ENCODE measurements at regions of chr1 and their contacts with region 1.

Region 1: DNA sequence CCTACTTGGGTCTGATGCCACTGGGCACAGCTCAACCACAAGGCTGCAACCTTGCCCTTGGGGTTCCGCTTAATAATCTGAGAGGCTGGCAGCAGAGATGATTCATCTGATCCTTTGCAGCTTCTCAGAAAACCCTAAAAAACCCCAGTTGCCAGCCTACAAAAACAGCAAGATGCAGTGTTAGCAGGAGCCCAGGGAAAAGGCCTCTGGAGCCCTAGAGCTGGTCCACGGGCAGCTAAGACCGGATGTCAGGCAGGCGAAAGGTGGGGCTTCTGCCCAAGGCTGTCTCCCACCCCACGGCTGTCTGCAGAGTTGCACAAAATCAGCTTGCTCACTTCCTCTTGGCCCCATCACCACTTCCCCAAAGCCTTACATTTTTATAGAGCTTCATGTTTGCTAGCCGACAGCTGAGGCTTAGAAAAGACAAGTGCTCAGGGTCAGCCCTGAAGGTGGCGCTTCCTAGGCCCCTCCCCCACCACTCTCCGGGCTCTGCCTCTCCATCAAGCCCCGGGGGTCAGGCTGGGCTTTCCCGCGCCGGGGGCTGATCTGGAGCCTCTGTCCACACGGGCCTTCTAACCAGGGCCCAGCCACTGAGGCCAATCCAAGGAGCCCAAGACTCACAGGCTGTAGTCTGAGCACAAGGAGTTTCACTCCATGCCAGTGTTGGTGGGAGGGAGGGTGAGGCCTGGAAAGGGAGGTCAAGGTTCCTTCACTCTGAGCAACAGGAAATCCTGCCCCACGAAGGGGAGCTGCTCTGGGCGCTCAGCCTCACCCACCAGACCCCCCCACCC is 4.2 kb upstream of the ADORA3 start:
- DNase-seq: peak; percentile 96
- H3K4me3 ChIP-seq: peak overlapping the region; percentile 23 to 48 (median 36)
- H3K27ac ChIP-seq: peak overlapping the region; percentile 89 to 95 (median 92)
- H3K4me1 ChIP-seq: peaks cover 42 to 83% (median 64%) of the 10 kb centered on the region in 4 donors
- H3K27me3 ChIP-seq: no peaks in the 10 kb centered on the region
- CTCF ChIP-seq: no peak
- EP300 ChIP-seq: no peak
- POLR2A ChIP-seq: no peak

Region 2: DNA sequence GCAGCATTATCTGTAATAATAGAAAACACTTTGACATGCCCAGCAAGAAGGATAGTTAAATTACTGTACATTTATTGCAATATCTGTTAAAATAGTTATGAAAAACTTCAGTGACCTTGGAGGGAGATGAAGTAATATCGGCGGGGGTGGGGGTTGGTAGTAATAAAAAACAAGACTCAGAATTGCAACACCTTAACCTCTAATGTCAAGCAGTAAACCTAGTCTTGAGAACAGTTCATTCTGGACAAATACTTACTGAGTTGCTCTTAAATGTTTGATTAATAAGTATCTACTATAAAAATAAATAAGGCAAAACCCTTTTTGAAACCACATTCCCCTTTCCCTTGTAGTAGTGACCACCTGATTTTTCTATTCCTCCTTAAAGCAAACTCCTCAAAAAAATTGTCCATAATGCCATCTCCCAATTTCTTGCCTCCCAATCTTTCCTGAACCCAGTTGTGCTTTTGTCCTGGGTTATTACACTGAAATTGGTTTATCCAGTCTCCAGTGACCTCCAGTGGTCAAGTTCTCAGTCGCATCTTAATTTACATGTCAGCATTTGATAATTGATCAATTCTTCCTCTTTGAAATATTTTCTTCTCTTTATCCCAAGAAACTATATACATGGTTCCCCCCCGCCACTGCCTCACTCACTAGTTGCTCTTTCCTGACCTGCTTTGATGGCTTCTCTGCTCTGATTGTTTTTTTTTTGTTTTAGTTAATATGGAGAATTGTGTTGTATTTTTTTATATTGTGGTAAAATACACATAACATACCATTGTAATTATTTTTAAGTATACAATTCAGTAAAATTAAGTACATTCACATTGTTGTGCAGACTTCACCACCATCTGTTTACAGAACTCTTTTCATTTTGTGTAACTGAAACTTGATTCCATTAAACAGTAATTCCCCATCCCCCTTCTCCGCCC is 148.7 kb after region 1 on chr1:
- intact Hi-C with region 1: loop called (anchors 5 kb)
- DNase-seq: no peak
- H3K4me3 ChIP-seq: no peak overlapping the region
- H3K27ac ChIP-seq: peak overlapping the region; percentile 1 to 68 (median 40)
- H3K4me1 ChIP-seq: peaks cover 33 to 90% (median 78%) of the 10 kb centered on the region in 4 donors
- H3K27me3 ChIP-seq: no peaks in the 10 kb centered on the region
- CTCF ChIP-seq: peak; percentile 61 to 68 (median 66)
- EP300 ChIP-seq: no peak
- POLR2A ChIP-seq: no peak

Region 3: DNA sequence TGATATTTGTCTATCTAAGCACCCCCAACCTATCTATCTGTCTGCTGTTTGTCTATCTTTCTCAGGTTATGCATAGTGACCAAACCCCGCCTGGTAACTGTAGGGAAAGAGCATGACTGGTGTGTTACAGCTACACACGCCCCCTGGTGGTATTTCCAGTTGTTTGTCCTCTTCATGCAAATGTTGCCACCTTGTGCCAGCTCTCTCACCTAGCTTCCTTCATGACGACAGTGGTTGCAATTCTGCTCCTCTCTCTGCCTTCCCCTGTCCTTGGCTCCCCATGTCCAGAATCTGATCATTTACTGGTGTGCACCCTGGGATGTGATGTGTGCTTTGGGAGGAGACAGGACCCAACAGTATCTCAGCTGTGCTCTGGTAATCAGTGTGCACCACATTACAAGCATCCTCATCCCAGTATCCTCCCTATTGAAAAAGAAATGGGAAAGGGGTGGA is 239.7 kb after region 1 on chr1:
- intact Hi-C with region 1: loop called (anchors 5 kb)
- DNase-seq: no peak
- H3K4me3 ChIP-seq: no peak overlapping the region
- H3K27ac ChIP-seq: no peak overlapping the region
- H3K4me1 ChIP-seq: peaks cover 3 to 16% (median 8%) of the 10 kb centered on the region in 4 donors
- H3K27me3 ChIP-seq: no peaks in the 10 kb centered on the region
- CTCF ChIP-seq: peak; percentile 54 to 66 (median 65)
- EP300 ChIP-seq: no peak
- POLR2A ChIP-seq: no peak